CD8-positive, alpha-beta T cell (primary cell): ENCODE measurements at regions of chrX and their contacts with region 1.

Region 1: GRCh38 chrX:7147978-7148824 is at the start of gene PUDP:
- DNase-seq: peak; percentile 66 to 95 (median 85)
- ATAC-seq: peak; percentile 83
- H3K4me3 ChIP-seq: peak within 1 kb of the TSS; percentile 88 to 100
- H3K4me3 Mint-ChIP-seq: peak within 1 kb of the TSS; percentile 88
- H3K27ac ChIP-seq: peak within 1 kb of the TSS; percentile 76 to 88
- H3K27ac Mint-ChIP-seq: peak within 1 kb of the TSS; percentile 88
- H3K4me1 ChIP-seq: peaks cover 5% of the 10 kb centered on the region
- H3K4me1 Mint-ChIP-seq: peaks cover 17% of the 10 kb centered on the region
- H3K27me3 ChIP-seq: no peaks in the 10 kb centered on the region
- H3K27me3 Mint-ChIP-seq: no peaks in the 10 kb centered on the region
- CTCF ChIP-seq: no peak
- total RNA-seq, gene PUDP: 1.8 to 2.4 TPM

Region 2: GRCh38 chrX:7083468-7084396 is 64.5 kb before region 1 on chrX:
- CTCF ChIA-PET with region 1: no interaction called
- POLR2A ChIA-PET with region 1: no interaction called
- intact Hi-C with region 1: loop called (anchors 5 to 10 kb)
- DNase-seq: peak; percentile 2 to 84 (median 51)
- ATAC-seq: peak; percentile 83
- H3K4me3 ChIP-seq: no peak overlapping the region
- H3K4me3 Mint-ChIP-seq: peak overlapping the region; percentile 54
- H3K27ac ChIP-seq: peak overlapping the region in 1 of 2 experiments; percentile 48
- H3K27ac Mint-ChIP-seq: peak overlapping the region; percentile 77
- H3K4me1 ChIP-seq: peaks cover 40% of the 10 kb centered on the region
- H3K4me1 Mint-ChIP-seq: peaks cover 55% of the 10 kb centered on the region
- H3K27me3 ChIP-seq: no peaks in the 10 kb centered on the region
- H3K27me3 Mint-ChIP-seq: no peaks in the 10 kb centered on the region
- CTCF ChIP-seq: no peak

Region 3: DNA sequence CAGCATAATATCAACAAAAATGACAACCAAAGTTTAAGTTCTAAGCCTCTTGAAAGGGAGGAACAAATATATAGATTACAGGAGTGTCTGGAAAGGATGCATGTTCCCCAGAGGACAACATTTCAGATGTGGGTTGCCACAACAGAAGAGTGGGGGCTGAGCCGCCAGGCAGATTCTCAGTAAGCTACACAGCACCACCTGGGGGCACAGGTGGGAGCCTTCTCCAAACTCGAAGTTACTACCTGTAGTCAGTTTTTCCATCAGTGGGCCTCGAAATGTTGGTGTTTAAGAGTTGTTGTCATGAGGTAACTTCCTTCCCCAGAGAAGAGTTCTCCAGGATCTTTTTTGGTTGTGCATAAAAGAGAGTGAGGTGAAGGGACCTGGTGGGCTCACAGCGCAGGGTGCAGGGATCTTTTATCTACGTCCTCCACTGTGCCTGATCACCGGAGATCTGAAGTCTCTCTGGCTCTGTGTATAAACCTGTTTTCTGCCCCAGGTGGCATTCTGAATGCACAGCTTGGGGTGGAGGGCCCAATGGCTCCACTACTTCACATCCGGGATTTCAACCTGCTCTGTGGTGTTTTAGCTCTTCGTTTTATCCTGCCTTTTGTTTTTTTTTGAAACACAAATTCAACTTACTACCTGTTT is 59.1 kb before region 1 on chrX:
- CTCF ChIA-PET with region 1: no interaction called
- POLR2A ChIA-PET with region 1: no interaction called
- intact Hi-C with region 1: loop called (anchors 5 to 10 kb)
- DNase-seq: peak in 7 of 9 experiments; percentile 18 to 68 (median 50)
- ATAC-seq: peak; percentile 53
- H3K4me3 ChIP-seq: no peak overlapping the region
- H3K4me3 Mint-ChIP-seq: no peak overlapping the region
- H3K27ac ChIP-seq: no peak overlapping the region
- H3K27ac Mint-ChIP-seq: peak overlapping the region; percentile 86
- H3K4me1 ChIP-seq: peaks cover 23% of the 10 kb centered on the region
- H3K4me1 Mint-ChIP-seq: peaks cover 52% of the 10 kb centered on the region
- H3K27me3 ChIP-seq: no peaks in the 10 kb centered on the region
- H3K27me3 Mint-ChIP-seq: no peaks in the 10 kb centered on the region
- CTCF ChIP-seq: peak; percentile 28

Region 4: GRCh38 chrX:7412840-7413239 is 264.6 kb after region 1 on chrX:
- CTCF ChIA-PET with region 1: no interaction called
- POLR2A ChIA-PET with region 1: no interaction called
- intact Hi-C with region 1: no loop called
- DNase-seq: no peak
- ATAC-seq: no peak
- H3K4me3 ChIP-seq: no peak overlapping the region
- H3K4me3 Mint-ChIP-seq: no peak overlapping the region
- H3K27ac ChIP-seq: no peak overlapping the region
- H3K27ac Mint-ChIP-seq: no peak overlapping the region
- H3K4me1 ChIP-seq: no peaks in the 10 kb centered on the region
- H3K4me1 Mint-ChIP-seq: no peaks in the 10 kb centered on the region
- H3K27me3 ChIP-seq: no peaks in the 10 kb centered on the region
- H3K27me3 Mint-ChIP-seq: no peaks in the 10 kb centered on the region
- CTCF ChIP-seq: no peak

Region 5: GRCh38 chrX:7512845-7513244 is 364.6 kb after region 1 on chrX:
- CTCF ChIA-PET with region 1: no interaction called
- POLR2A ChIA-PET with region 1: no interaction called
- intact Hi-C with region 1: no loop called
- DNase-seq: no peak
- ATAC-seq: no peak
- H3K4me3 ChIP-seq: no peak overlapping the region
- H3K4me3 Mint-ChIP-seq: no peak overlapping the region
- H3K27ac ChIP-seq: no peak overlapping the region
- H3K27ac Mint-ChIP-seq: no peak overlapping the region
- H3K4me1 ChIP-seq: no peaks in the 10 kb centered on the region
- H3K4me1 Mint-ChIP-seq: no peaks in the 10 kb centered on the region
- H3K27me3 ChIP-seq: no peaks in the 10 kb centered on the region
- H3K27me3 Mint-ChIP-seq: no peaks in the 10 kb centered on the region
- CTCF ChIP-seq: no peak

Region 6: GRCh38 chrX:7925867-7926472 is 777.8 kb after region 1 on chrX:
- CTCF ChIA-PET with region 1: no interaction called
- POLR2A ChIA-PET with region 1: no interaction called
- intact Hi-C with region 1: loop called (anchors 5 kb)
- DNase-seq: peak; percentile 20 to 77 (median 63)
- ATAC-seq: peak; percentile 50
- H3K4me3 ChIP-seq: no peak overlapping the region
- H3K4me3 Mint-ChIP-seq: peak overlapping the region; percentile 90
- H3K27ac ChIP-seq: no peak overlapping the region
- H3K27ac Mint-ChIP-seq: no peak overlapping the region
- H3K4me1 ChIP-seq: peaks cover 8% of the 10 kb centered on the region
- H3K4me1 Mint-ChIP-seq: peaks cover 17% of the 10 kb centered on the region
- H3K27me3 ChIP-seq: no peaks in the 10 kb centered on the region
- H3K27me3 Mint-ChIP-seq: no peaks in the 10 kb centered on the region
- CTCF ChIP-seq: peak; percentile 59